ENCODE measurements at regions of chr15 and their contacts with region 1.

Region 1: DNA sequence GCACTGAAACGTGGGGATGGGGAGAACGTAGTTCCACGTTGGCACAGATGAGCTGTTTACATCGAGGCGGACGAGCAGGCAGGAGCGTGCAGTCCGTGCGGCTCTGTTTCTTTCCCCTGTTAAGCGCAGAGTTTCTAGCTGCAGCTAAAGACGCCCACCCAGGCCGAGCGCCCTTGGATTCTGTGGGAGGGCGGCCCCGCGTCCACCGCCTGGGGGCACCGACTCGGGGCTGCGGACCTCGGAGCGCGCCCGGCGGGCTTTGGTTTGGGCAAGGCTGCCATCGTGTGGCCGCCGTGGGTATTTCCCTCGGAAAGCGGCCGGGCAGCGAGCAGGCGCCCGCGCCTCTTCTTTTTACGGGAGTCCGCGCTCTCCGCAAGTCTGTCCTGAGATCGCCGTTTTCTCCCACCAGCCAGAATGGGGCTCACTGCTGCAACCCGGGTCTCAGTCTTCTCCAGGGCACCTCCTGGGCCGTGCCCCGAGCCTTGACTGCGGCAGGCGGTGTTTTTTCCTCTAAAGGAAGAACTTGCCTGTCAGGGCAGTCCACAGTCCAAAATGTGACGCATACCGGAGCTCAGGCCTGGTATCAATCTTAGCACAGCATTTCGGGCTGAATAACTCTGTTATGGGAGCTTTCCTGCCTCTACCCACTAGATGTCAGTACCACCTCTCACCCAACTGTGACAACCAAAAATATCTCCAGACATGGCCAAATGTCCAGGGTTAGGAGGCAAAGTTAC is 219.9 kb upstream of the IGF1R start:
- DNase-seq: peak; percentile 59
- H3K4me3 Mint-ChIP-seq: peak overlapping the region; percentile 69
- H3K27ac Mint-ChIP-seq: no peak overlapping the region
- H3K4me1 Mint-ChIP-seq: peaks cover 8% of the 10 kb centered on the region
- H3K27me3 Mint-ChIP-seq: peaks cover 15% of the 10 kb centered on the region
- CTCF ChIP-seq: peak; percentile 79

Region 2: DNA sequence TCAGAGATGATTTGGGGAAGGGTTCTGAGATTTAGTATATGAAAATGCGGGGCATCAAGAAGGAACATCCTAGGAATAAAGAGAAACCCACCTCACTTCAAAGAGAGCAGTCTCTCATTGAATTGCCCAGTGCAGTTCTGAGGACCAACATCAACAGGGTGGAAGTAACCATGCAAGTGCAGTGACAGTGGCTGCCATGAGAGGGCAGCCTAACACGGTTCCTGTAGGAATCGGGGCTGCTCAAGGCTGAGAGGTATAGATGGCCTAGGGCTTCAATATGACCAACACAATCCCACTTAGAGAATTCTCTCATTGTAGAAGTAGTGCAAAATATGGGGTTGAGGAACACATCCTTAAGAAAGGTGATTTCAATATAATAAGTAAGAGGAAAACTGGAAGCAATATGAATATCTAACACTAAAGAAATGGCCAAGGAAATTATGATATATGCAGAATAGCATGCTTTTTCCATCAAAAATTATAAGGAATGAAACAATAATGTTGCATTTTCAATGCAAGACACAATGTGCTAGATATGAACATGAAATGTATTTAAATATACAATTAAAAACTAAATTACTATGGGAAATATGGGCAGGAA is 519.0 kb before region 1 on chr15:
- CTCF ChIA-PET with region 1: interaction called, 5 read pairs
- POLR2A ChIA-PET with region 1: no interaction called
- intact Hi-C with region 1: loop called (anchors 10 kb)
- DNase-seq: peak; percentile 66
- H3K4me3 Mint-ChIP-seq: no peak overlapping the region
- H3K27ac Mint-ChIP-seq: no peak overlapping the region
- H3K4me1 Mint-ChIP-seq: peaks cover 8% of the 10 kb centered on the region
- H3K27me3 Mint-ChIP-seq: no peaks in the 10 kb centered on the region
- CTCF ChIP-seq: peak; percentile 93

Region 3: GRCh38 chr15:98277602-98278001 is 150.8 kb before region 1 on chr15:
- CTCF ChIA-PET with region 1: no interaction called
- POLR2A ChIA-PET with region 1: no interaction called
- intact Hi-C with region 1: no loop called
- DNase-seq: no peak
- H3K4me3 Mint-ChIP-seq: no peak overlapping the region
- H3K27ac Mint-ChIP-seq: no peak overlapping the region
- H3K4me1 Mint-ChIP-seq: no peaks in the 10 kb centered on the region
- H3K27me3 Mint-ChIP-seq: no peaks in the 10 kb centered on the region
- CTCF ChIP-seq: no peak

Region 4: DNA sequence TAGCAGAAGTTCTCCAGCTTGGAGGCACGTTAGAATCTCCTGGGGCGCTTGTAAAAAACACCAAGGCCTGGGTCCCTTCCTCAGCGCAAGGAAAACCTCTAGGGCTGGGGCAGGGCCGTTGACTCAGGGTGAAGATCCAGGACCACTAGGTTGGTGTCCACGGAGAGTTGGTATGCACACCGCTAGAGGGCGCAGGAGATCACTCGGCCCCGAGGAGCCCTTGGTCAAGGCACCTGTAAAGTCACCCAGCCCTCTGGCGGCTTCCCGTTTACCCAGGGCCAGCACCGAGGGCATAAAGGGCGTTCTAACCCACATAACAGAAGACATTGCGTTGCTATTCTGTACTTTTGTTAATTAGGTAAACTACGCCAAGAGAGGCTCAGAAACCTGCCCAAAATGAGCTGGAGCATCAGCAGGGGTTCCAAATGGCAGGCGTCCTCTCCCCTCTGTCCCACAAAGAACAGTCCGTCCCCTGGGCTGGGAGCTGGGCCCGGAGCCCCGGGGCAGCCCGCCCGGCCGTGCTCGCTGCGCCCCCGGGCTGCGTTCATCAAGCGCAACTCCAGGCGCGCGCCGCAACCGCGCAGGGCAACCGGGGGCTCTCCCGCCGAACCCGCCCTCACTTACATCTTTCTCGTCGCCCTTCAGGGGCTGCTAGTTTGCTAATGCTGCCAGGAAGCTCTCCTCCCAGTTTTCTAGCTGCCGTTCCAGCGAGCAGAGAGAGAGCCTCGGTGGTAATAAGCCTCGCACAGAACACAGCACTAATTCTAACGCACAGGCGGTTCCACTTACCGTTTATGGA is 135.8 kb before region 1 on chr15:
- CTCF ChIA-PET with region 1: interaction called, 14 read pairs
- POLR2A ChIA-PET with region 1: no interaction called
- intact Hi-C with region 1: loop called (anchors 5 kb)
- DNase-seq: peak; percentile 60
- H3K4me3 Mint-ChIP-seq: no peak overlapping the region
- H3K27ac Mint-ChIP-seq: no peak overlapping the region
- H3K4me1 Mint-ChIP-seq: no peaks in the 10 kb centered on the region
- H3K27me3 Mint-ChIP-seq: peaks cover 16% of the 10 kb centered on the region
- CTCF ChIP-seq: peak; percentile 78

Region 5: GRCh38 chr15:98311566-98312188 is 116.7 kb before region 1 on chr15:
- CTCF ChIA-PET with region 1: interaction called, 239 read pairs
- POLR2A ChIA-PET with region 1: interaction called, 8 read pairs
- intact Hi-C with region 1: loop called (anchors 2 kb)
- DNase-seq: peak; percentile 79
- H3K4me3 Mint-ChIP-seq: no peak overlapping the region
- H3K27ac Mint-ChIP-seq: no peak overlapping the region
- H3K4me1 Mint-ChIP-seq: peaks cover 5% of the 10 kb centered on the region
- H3K27me3 Mint-ChIP-seq: peaks cover 32% of the 10 kb centered on the region
- CTCF ChIP-seq: peak; percentile 63

Region 6: DNA sequence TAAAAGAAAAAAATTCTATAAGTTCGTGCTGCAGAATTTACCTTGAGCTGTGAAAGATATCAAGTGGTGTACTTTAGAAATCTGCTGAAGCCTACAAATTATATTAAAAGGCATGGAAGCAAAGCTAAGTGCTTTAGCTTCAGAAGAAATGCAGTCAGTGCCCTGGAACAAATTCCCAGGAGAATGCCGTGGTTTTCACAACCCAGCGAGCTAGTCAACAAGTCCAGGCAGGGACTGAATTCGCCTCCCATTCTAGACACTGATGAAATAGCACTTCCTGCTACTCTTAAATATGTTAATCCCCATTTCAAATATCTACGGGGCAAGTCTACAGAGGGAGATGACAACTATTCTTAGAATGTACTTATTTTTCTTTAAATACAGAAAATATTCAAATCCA is 106.5 kb before region 1 on chr15:
- CTCF ChIA-PET with region 1: interaction called, 13 read pairs
- POLR2A ChIA-PET with region 1: interaction called, 6 read pairs
- intact Hi-C with region 1: no loop called
- DNase-seq: peak; percentile 77
- H3K4me3 Mint-ChIP-seq: peak overlapping the region; percentile 12
- H3K27ac Mint-ChIP-seq: peak overlapping the region; percentile 80
- H3K4me1 Mint-ChIP-seq: peaks cover 10% of the 10 kb centered on the region
- H3K27me3 Mint-ChIP-seq: no peaks in the 10 kb centered on the region
- CTCF ChIP-seq: no peak

Region 7: DNA sequence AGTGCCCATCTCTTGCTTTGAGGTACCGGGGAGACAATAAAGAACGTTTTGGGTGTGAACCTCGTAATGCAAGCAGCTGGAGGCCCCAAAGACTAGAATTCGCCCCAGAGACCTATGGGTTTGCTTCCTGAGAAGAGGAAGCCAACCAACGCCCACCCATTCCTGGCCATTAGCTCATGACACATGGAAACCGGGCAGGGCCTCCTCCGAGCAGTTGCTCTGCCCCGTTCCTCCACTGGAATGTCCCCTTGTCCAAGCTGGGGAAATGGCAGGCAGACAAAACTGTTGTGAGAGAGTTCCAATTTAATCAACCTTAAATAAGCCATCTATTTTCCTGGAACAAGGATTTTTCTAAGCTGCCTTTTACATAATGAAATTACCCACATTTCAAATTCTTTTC is 31.0 kb before region 1 on chr15:
- CTCF ChIA-PET with region 1: interaction called, 10 read pairs
- POLR2A ChIA-PET with region 1: no interaction called
- intact Hi-C with region 1: no loop called
- DNase-seq: no peak
- H3K4me3 Mint-ChIP-seq: no peak overlapping the region
- H3K27ac Mint-ChIP-seq: no peak overlapping the region
- H3K4me1 Mint-ChIP-seq: no peaks in the 10 kb centered on the region
- H3K27me3 Mint-ChIP-seq: peaks cover 36% of the 10 kb centered on the region
- CTCF ChIP-seq: no peak

Region 8: DNA sequence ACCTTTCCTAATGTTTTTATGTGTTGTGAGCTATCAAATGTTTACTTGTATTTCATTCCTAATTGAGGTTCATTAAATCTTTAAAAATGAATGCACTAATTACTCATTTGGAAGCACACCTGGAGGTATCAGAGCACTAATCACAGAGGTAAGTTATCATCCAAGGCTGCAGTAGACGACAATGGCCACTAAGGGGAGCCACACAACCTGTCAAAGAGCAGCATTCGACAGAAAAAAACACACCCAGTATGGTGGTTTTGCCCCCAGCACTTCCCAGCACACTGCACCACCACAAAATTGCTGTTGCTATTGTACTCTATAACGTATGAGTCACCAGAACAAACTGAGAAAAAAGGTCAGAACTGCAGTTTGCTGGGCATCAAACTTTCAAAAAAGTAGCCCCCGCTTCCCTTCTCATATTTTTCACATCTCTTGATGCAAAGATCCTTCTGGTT is 14.0 kb after region 1 on chr15:
- CTCF ChIA-PET with region 1: interaction called, 28 read pairs
- POLR2A ChIA-PET with region 1: no interaction called
- intact Hi-C with region 1: no loop called
- DNase-seq: peak; percentile 89
- H3K4me3 Mint-ChIP-seq: no peak overlapping the region
- H3K27ac Mint-ChIP-seq: no peak overlapping the region
- H3K4me1 Mint-ChIP-seq: peaks cover 9% of the 10 kb centered on the region
- H3K27me3 Mint-ChIP-seq: peaks cover 22% of the 10 kb centered on the region
- CTCF ChIP-seq: peak; percentile 89

Measured in MCF 10A (cell line).